Activated CD4-positive, alpha-beta T cell treated with anti-CD3 and anti-CD28 coated beads for 36 hours (primary cell): ENCODE measurements at regions of chr3 and their contacts with region 1.

Region 1: GRCh38 chr3:52339612-52340011 is 23.5 kb downstream of the DNAH1 start:
- DNase-seq: peak; percentile 59
- ATAC-seq: peak; percentile 74
- H3K4me3 Mint-ChIP-seq: no peak overlapping the region
- H3K27ac Mint-ChIP-seq: peak overlapping the region; percentile 32
- H3K4me1 Mint-ChIP-seq: peaks cover 6% of the 10 kb centered on the region
- H3K27me3 Mint-ChIP-seq: no peaks in the 10 kb centered on the region

Region 2: DNA sequence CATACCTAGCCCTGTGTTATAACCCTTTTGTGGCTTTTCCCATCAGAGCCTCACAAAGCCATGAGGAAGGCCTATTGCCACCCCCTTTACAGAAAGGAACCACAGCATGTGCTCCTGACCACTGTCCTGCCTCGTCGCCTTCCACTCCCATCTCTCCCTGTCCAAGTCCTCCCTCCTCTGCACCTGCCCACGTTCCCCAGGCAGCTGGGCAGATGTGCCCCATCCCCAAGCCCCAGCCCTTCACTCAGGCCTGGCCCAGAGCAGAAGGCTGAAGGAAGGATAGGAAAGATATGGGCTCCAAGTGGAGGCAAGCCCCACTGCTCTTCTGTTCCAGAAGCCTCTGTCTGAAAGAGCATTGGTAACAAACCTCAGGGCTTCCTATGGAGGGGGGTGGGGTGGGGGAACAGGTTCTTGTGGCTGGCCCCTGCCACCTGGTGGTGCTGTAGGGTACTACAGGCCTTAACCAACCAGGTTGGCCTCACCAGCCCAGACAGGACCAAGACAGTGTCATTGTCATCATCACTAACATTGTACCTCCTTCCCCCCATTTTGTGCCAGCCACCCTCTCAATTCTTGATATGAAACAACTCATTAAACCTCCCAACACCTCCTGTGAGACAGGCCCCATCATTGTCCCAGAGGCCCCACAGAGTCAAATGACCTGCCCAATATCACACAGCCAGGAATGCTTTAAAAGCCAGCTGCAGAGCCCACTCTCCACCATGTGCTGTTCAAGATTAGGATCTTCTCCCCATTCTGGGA is 195.4 kb before region 1 on chr3:
- CTCF ChIA-PET with region 1: interaction called, 4 read pairs
- POLR2A ChIA-PET with region 1: no interaction called
- intact Hi-C with region 1: loop called in 1 of 2 experiments (anchors 1 kb)
- DNase-seq: peak; percentile 91
- ATAC-seq: peak; percentile 96
- H3K4me3 Mint-ChIP-seq: no peak overlapping the region
- H3K27ac Mint-ChIP-seq: no peak overlapping the region
- H3K4me1 Mint-ChIP-seq: peaks cover 7% of the 10 kb centered on the region
- H3K27me3 Mint-ChIP-seq: no peaks in the 10 kb centered on the region

Region 3: DNA sequence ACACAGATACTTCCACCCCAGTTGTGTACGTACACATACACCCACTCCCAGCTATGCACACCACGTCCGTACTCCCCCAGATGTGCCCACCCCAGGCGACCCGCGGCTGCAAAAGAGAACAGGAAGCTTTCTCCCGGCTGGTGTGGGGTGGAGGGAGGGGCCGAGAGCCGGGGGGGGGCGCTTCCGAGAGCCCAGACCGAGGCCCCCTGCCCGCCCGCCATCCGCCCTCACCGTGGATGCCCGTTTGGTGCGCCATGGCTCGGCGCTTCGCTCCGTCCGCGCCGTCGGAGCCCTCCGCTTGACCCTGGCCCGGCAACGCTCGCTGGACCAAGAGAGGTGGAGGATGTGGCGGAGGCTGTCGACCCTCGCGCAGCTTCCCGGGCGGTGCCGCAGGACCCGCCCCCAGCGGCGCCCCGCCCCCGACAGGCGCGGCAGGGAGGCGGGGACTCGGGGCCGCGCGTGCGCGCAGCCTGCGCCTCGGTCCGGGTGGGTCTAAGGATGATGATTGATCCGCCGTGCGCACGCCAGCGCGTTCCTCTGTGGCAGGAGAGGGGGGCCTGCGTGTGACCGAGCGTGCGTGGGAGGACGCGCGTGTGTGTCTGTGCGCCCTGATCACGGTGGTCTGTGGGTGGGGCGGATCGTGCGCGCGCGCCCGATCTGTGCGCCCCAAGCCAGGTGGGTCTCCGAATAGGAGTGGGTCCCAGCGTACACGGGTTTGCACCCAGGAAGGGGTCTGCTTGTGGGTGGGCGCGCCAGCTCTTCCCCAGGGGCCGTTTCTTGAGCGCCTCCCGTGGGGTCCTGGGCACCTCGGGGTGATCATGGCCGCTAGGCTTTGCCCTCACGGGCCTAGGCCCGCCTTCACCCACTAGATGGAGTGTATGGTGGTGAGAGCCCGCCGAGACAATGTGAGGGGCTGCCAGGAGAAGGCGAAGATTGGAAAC is 100.6 kb before region 1 on chr3 and contains the start of gene TWF2:
- CTCF ChIA-PET with region 1: interaction called, 13 read pairs
- POLR2A ChIA-PET with region 1: interaction called, 5 read pairs
- intact Hi-C with region 1: no loop called
- DNase-seq: peak; percentile 92
- ATAC-seq: peak; percentile 67
- H3K4me3 Mint-ChIP-seq: peak within 1 kb of the TSS; percentile 99
- H3K27ac Mint-ChIP-seq: peak within 1 kb of the TSS; percentile 99
- H3K4me1 Mint-ChIP-seq: peaks cover 70% of the 10 kb centered on the region
- H3K27me3 Mint-ChIP-seq: no peaks in the 10 kb centered on the region
- total RNA-seq, gene TWF2: 85.0 to 93.5 TPM

Region 4: GRCh38 chr3:52317208-52318000 is 22.2 kb before region 1 on chr3:
- CTCF ChIA-PET with region 1: interaction called, 15 read pairs
- POLR2A ChIA-PET with region 1: no interaction called
- intact Hi-C with region 1: no loop called
- DNase-seq: peak; percentile 83
- ATAC-seq: peak; percentile 96
- H3K4me3 Mint-ChIP-seq: peak overlapping the region; percentile 50
- H3K27ac Mint-ChIP-seq: no peak overlapping the region
- H3K4me1 Mint-ChIP-seq: peaks cover 20% of the 10 kb centered on the region
- H3K27me3 Mint-ChIP-seq: no peaks in the 10 kb centered on the region